ENCODE measurements at regions of chr4 and their contacts with region 1.

Region 1: GRCh38 chr4:102610007-102610406 is 108.8 kb downstream of the NFKB1 start:
- DNase-seq: no peak
- ATAC-seq: no peak
- H3K4me3 ChIP-seq: no peak overlapping the region
- H3K27ac ChIP-seq: no peak overlapping the region
- H3K4me1 ChIP-seq: no peaks in the 10 kb centered on the region
- H3K27me3 ChIP-seq: no peaks in the 10 kb centered on the region
- CTCF ChIP-seq: peak; percentile 9 to 35 (median 23)
- POLR2A ChIP-seq: no peak

Region 2: DNA sequence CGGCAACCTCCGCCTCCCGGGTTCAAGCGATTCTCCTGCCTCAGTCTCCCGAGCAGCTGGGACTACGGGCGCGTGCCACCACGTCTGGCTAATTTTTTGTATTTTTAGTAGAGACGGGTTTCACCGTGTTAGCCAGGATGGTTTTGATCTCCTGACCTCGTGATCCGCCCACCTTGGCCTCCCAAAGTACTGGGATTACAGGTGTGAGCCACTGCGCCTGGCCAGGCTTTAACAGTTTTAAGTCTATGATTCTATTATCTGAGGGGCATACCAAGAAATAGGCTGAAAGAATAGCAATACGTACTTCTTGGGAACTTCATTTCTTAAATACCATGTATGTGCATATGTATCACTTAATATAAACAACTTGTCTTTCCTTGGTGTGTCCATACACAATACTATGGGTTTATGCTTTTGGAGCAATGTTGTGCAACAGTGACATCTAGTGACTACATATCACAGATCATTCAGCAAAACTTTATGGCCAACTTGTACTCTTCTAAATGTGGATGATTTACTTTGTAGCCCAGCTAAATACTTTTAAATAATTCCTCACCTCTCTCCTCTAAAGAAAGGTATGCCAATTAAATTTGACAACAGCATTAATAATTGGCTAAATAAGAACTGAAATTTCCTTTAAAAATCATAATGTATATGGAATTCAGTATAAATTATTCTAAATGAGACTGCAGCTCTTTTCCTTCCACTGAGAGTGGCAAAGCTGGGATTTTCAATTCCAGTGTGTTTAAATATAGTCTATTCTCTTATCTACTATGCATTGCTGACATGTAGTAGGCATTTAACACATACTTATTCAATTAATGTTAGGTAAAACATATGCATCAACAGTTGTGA is 399.1 kb after region 1 on chr4:
- intact Hi-C with region 1: loop called in 1 of 2 experiments (anchors 10 kb)
- DNase-seq: no peak
- ATAC-seq: peak; percentile 94 to 97 (median 96)
- H3K4me3 ChIP-seq: no peak overlapping the region
- H3K27ac ChIP-seq: no peak overlapping the region
- H3K4me1 ChIP-seq: peaks cover 0 to 14% (median 3%) of the 10 kb centered on the region in 4 donors
- H3K27me3 ChIP-seq: no peaks in the 10 kb centered on the region
- CTCF ChIP-seq: peak; percentile 72 to 77 (median 77)
- POLR2A ChIP-seq: no peak

Measured in right lobe of liver (tissue), 6 donors.